RWPE1 (cell line): ENCODE measurements at regions of chr4 and their contacts with region 1.

Region 1: GRCh38 chr4:21628916-21629610 is 319.5 kb downstream of the KCNIP4 start:
- DNase-seq: no peak
- H3K27ac ChIP-seq: no peak overlapping the region
- CTCF ChIP-seq: no peak

Region 2: DNA sequence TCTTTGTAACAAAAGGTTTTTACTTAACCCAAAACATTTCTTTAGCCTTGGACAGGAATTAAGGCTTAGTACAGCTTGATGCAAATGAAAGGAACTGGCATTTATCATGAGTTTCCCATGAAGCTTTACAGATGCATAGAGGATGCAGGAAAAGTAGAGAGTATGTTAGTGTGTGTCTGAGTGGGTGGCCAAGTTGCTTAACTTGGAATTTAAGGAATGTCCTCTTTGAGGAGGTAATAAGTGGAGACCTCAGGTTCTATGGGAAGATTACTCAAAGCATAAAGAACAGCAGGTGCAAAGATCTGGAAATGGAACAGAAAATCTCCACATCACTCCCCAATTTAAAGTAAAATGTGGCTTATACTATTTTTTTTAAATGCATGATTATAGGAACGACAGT is 138.4 kb before region 1 on chr4:
- CTCF ChIA-PET with region 1: no interaction called
- POLR2A ChIA-PET with region 1: no interaction called
- DNase-seq: no peak
- H3K27ac ChIP-seq: no peak overlapping the region
- CTCF ChIP-seq: no peak

Region 3: DNA sequence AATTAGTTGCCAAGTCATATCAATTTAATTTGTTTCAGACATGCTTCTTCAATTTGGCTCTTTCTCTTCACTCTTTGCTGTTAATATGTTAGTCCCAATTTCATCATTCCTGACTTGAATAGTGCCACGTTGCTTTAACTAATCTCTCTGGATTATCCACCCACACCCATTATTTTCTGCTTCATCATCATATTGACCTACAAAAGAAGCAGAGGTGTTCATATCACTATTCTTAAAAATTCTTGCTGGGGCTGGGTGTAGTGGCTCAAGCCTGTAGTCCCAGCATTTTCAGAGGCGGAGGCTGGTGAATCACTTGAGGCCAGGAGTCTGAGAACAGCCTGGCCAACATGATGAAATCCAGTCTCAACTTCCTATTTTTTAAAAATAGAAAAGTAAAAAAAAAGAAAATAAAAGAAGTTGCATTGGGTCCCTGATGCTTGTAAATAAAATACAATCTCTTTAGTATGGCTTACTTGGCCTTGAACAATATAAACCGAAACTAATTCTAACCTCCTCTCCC is 385.2 kb after region 1 on chr4:
- CTCF ChIA-PET with region 1: interaction called, 13 read pairs
- POLR2A ChIA-PET with region 1: no interaction called
- DNase-seq: no peak
- H3K27ac ChIP-seq: no peak overlapping the region
- CTCF ChIP-seq: no peak

Region 4: DNA sequence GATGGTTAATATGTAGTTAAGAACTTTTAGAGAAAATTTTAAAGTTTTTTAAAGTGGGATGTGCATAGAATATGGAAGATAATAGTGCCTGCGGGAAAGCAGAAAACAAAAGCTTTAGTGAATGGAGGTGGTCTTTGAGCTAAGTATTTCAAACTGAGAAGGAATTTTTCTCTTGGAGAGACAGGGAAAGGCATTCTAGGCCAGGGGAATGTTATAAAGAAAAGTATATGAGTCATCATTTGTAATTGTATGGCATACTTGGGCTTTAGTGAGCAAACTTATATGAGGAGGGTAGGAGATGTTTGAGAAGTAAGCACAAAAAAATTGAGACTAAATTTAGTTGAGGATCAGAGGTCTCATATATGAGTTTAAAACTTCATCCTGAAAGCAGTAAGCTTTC is 1793.8 kb after region 1 on chr4:
- CTCF ChIA-PET with region 1: no interaction called
- POLR2A ChIA-PET with region 1: no interaction called
- DNase-seq: no peak
- H3K27ac ChIP-seq: no peak overlapping the region
- CTCF ChIP-seq: no peak